ENCODE measurements at regions of chr3 and their contacts with region 1.

Region 1: GRCh38 chr3:21226086-21226485 is 524.9 kb downstream of the ZNF385D start:
- DNase-seq: no peak
- ATAC-seq: no peak
- H3K4me3 ChIP-seq: no peak overlapping the region
- H3K27ac ChIP-seq: no peak overlapping the region
- H3K4me1 ChIP-seq: no peaks in the 10 kb centered on the region
- H3K27me3 ChIP-seq: no peaks in the 10 kb centered on the region
- CTCF ChIP-seq: no peak

Region 2: DNA sequence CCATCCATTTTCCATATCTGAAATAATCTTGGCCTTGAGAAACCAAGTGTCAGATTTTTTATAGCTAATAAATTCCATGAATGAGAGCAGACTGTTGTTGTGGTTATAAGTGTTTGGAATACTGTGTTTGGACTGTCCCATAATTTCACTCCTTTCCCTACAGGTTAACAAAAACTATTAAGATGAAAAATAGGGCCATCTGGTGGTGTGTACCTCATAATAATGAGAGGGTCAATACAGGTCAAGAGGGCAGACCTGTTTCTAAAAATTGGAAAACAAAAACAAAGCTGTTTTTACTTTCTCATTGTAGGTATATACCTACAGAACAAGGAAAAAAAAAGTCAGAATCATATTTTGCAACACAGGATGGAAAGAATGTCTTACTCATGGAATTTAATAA is 486.3 kb before region 1 on chr3:
- CTCF ChIA-PET with region 1: no interaction called
- POLR2A ChIA-PET with region 1: no interaction called
- intact Hi-C with region 1: no loop called
- DNase-seq: no peak
- ATAC-seq: no peak; the same call in 1 of the 2 replicates
- H3K4me3 ChIP-seq: no peak overlapping the region
- H3K27ac ChIP-seq: no peak overlapping the region
- H3K4me1 ChIP-seq: no peaks in the 10 kb centered on the region
- H3K27me3 ChIP-seq: no peaks in the 10 kb centered on the region
- CTCF ChIP-seq: 0 out of 2 replicates have a peak, but pooled peaks have one; percentile 18

Region 3: DNA sequence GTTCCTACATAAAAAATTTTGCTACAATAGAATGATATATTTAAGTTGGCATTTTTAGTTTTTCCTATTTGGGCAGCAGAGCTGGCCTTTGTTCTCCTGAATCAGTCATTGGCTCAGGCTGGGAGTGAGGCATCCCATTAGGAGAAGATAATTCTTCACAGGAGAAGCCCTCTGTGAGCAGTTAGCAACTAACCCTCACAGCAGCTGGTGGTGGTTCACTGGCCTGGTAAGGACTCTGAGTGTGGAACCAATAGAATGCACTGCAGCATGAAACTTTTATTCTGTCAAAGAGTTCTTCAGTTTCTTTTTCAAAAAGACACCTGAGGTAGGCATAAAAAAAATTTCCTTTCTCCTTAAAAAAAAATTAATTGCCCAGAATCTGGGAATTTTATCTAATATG is 37.6 kb before region 1 on chr3:
- CTCF ChIA-PET with region 1: no interaction called
- POLR2A ChIA-PET with region 1: no interaction called
- intact Hi-C with region 1: no loop called
- DNase-seq: no peak
- ATAC-seq: no peak
- H3K4me3 ChIP-seq: no peak overlapping the region
- H3K27ac ChIP-seq: no peak overlapping the region
- H3K4me1 ChIP-seq: no peaks in the 10 kb centered on the region
- H3K27me3 ChIP-seq: no peaks in the 10 kb centered on the region
- CTCF ChIP-seq: no peak

Region 4: GRCh38 chr3:21446027-21446426 is 219.9 kb after region 1 on chr3:
- CTCF ChIA-PET with region 1: no interaction called
- POLR2A ChIA-PET with region 1: interaction called, 18 read pairs
- intact Hi-C with region 1: no loop called
- DNase-seq: no peak
- ATAC-seq: no peak
- H3K4me3 ChIP-seq: no peak overlapping the region
- H3K27ac ChIP-seq: no peak overlapping the region
- H3K4me1 ChIP-seq: no peaks in the 10 kb centered on the region
- H3K27me3 ChIP-seq: no peaks in the 10 kb centered on the region
- CTCF ChIP-seq: no peak

Region 5: GRCh38 chr3:21477541-21478288 is 251.6 kb after region 1 on chr3:
- CTCF ChIA-PET with region 1: no interaction called
- POLR2A ChIA-PET with region 1: no interaction called
- intact Hi-C with region 1: loop called (anchors 5 kb)
- DNase-seq: no peak
- ATAC-seq: no peak
- H3K4me3 ChIP-seq: no peak overlapping the region
- H3K27ac ChIP-seq: no peak overlapping the region
- H3K4me1 ChIP-seq: 0 out of 2 replicates have a peak, but pooled peaks cover 3% of the 10 kb centered on the region
- H3K27me3 ChIP-seq: no peaks in the 10 kb centered on the region
- CTCF ChIP-seq: no peak

Measured in PC-3 (cell line).